Activated naive CD8-positive, alpha-beta T cell treated with anti-CD3 and anti-CD28 coated beads, Interleukin-2, amount 10 ng/mL, durations not matched to agents 7 days and 5 days (primary cell): ENCODE measurements at regions of chr17 and their contacts with region 1.

Region 1: GRCh38 chr17:40559954-40560591 is 5.2 kb downstream of the CCR7 start:
- DNase-seq: peak; percentile 88
- ATAC-seq: peak; percentile 20
- H3K4me3 Mint-ChIP-seq: peak overlapping the region; percentile 97
- H3K27ac Mint-ChIP-seq: peak overlapping the region; percentile 99
- H3K4me1 Mint-ChIP-seq: peaks cover 51% of the 10 kb centered on the region
- H3K27me3 Mint-ChIP-seq: no peaks in the 10 kb centered on the region

Region 2: GRCh38 chr17:40516581-40517285 is 43.3 kb before region 1 on chr17:
- POLR2A ChIA-PET with region 1: interaction called, 20 read pairs
- DNase-seq: peak; percentile 66
- ATAC-seq: peak; percentile 82
- H3K4me3 Mint-ChIP-seq: peak overlapping the region; percentile 78
- H3K27ac Mint-ChIP-seq: peak overlapping the region; percentile 91
- H3K4me1 Mint-ChIP-seq: peaks cover 56% of the 10 kb centered on the region
- H3K27me3 Mint-ChIP-seq: peaks cover 2% of the 10 kb centered on the region

Region 3: DNA sequence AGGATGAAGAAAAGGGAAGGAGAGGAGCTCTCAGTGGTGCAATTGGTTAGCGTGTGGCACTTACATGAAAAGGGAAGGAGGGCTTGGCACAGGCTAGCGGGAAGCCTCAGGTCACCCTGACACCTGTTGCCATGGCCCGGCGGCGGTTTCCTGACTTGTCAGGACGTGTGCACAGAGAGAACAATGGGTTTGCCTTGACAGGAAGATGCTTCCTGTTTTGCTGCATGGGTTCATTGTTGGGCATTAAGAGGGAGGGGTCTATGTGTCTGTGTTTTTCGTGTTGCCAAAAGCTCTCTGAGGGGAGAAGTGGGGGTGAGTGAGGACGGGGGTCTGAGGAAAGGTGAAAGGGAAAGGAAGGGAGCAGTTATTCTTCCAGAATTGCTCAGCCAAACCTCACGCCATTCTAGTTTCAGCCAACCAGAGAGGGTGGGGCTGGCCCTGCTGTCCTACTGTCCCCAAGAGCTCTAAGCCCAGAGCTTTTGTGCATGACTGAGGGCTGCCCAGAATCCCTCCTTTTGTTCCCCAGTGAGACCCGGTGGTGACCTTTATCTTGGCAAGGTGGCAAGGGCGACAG is 22.3 kb after region 1 on chr17:
- POLR2A ChIA-PET with region 1: interaction called, 92 read pairs
- DNase-seq: peak; percentile 76
- ATAC-seq: peak; percentile 87
- H3K4me3 Mint-ChIP-seq: peak overlapping the region; percentile 75
- H3K27ac Mint-ChIP-seq: peak overlapping the region; percentile 95
- H3K4me1 Mint-ChIP-seq: peaks cover 73% of the 10 kb centered on the region
- H3K27me3 Mint-ChIP-seq: no peaks in the 10 kb centered on the region

Region 4: GRCh38 chr17:40598663-40599467 is 38.8 kb after region 1 on chr17:
- POLR2A ChIA-PET with region 1: interaction called, 257 read pairs
- DNase-seq: no peak
- ATAC-seq: peak; percentile 23
- H3K4me3 Mint-ChIP-seq: peak overlapping the region; percentile 79
- H3K27ac Mint-ChIP-seq: peak overlapping the region; percentile 98
- H3K4me1 Mint-ChIP-seq: peaks cover 77% of the 10 kb centered on the region
- H3K27me3 Mint-ChIP-seq: no peaks in the 10 kb centered on the region

Region 5: GRCh38 chr17:40629842-40630241 is 69.8 kb after region 1 on chr17:
- POLR2A ChIA-PET with region 1: no interaction called
- DNase-seq: no peak
- ATAC-seq: no peak
- H3K4me3 Mint-ChIP-seq: no peak overlapping the region
- H3K27ac Mint-ChIP-seq: no peak overlapping the region
- H3K4me1 Mint-ChIP-seq: peaks cover 7% of the 10 kb centered on the region
- H3K27me3 Mint-ChIP-seq: no peaks in the 10 kb centered on the region

Region 6: GRCh38 chr17:40647624-40648383 is 87.7 kb after region 1 on chr17 and contains the start of gene SMARCE1:
- POLR2A ChIA-PET with region 1: interaction called, 18 read pairs
- DNase-seq: peak; percentile 84
- ATAC-seq: peak; percentile 73
- H3K4me3 Mint-ChIP-seq: peak within 1 kb of the TSS; percentile 95
- H3K27ac Mint-ChIP-seq: peak within 1 kb of the TSS; percentile 94
- H3K4me1 Mint-ChIP-seq: peaks cover 21% of the 10 kb centered on the region
- H3K27me3 Mint-ChIP-seq: no peaks in the 10 kb centered on the region
- total RNA-seq, gene SMARCE1: 109 to 117 TPM